H1 (cell line): ENCODE measurements at regions of chr6 and their contacts with region 1.

Region 1: DNA sequence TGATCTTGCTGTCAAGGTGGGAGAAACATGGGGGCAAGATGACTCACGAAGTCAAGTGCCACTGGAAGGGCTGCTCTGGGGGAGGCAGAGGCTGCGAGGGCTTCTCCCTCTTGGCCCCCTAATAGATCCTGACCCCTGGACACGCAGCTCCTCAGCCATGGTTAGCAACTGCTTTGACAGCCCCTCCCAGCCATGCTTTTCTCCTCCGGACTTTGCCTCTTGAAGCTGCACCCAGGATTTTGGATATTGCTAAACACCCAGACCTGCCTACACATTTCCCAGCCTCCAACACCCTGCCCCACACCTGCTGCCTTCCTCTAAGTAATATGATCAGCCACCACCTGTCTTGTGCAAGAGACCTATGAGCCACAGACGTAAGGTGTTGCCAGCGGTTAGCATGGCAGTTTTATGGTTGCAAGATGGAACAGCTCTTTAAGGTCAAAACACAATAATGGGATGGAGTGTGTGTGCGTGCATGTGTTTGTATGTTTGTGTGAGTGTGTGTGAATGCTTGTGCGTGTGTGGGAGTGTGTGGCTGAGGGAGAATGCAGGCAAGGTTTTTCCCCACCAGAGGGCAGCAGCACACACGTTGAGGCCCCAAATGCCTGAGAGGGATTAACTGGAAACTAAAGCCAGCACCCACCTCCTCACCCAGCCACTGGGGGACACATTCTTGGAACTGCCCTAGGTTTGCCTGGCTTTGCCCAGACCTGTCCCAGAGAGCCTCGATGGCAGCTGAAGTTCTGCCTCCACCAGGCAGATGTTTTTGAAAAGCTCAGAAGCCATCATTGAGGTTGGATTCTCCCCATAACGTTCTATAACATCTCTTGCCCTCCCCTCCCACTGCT is 2.5 kb downstream of the IP6K3 start:
- DNase-seq: peak; percentile 62 to 90
- H3K4me3 ChIP-seq: no peak overlapping the region
- H3K27ac ChIP-seq: no peak overlapping the region
- H3K4me1 ChIP-seq: peaks cover 7 to 35% (median 23%) of the 10 kb centered on the region in 4 experiments
- H3K27me3 ChIP-seq: no peaks in the 10 kb centered on the region; a peak in 2 of 7 replicates
- CTCF ChIP-seq: peak in 2 of 3 experiments; percentile 96 to 99; a peak in 3 of 4 replicates
- EP300 ChIP-seq: no peak
- POLR2A ChIP-seq: no peak
- RAD21 ChIP-seq: peak; percentile 86 to 90

Region 2: DNA sequence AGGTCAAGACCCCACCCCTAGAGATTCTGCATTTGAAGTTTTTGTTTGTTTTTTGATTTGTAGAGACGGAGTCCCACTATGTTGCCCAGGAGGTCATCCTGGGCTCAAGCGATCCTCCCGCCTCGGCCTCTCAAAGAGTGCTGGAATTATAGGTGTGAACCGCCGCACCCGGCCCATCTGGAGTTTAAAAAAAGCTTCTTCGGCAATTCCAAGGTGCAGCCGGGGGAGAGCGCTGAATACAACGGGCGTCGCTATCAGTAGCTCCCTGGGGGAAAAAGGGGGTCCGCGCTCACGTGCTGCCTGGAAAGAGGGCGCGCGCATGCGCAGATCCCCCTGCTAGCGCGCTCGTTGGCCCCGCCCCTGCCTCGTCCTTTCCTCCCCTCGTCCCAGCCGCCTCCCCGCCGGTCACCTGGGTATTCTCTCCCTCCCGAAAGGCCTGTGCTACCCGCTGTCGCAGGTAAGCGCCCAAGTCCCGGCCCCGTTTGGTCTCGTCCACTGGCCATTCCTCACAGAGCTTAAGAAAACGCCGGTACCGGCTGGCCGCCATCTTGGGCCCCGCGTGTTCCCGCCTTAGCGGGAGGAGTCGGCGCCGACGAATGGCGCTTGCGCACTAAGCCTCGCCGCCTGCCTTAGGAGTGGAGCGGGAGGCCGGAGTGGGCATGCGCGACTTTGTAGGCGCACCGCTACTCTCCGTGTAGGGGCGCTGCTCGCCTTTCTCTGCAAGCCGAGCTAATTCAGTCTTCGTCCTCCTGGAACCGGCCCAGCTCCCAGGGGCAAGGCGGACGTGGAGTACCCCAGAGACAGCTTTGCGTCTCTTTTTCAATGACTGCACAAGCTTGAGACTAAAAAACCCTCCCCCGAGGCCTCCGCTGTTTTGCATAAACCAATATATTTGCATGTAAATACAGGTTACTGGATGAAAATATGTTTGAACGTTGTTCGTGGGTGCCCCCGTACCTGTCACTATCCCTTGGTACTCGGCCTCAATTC is 32.8 kb before region 1 on chr6 and contains the start of gene UQCC2:
- CTCF ChIA-PET with region 1: interaction called, 25 read pairs
- POLR2A ChIA-PET with region 1: interaction called, 5 read pairs
- DNase-seq: peak; percentile 93 to 96
- H3K4me3 ChIP-seq: peak within 1 kb of the TSS; percentile 59 to 86 (median 77)
- H3K27ac ChIP-seq: peak within 1 kb of the TSS; percentile 98
- H3K4me1 ChIP-seq: peaks cover 2 to 14% (median 6%) of the 10 kb centered on the region in 4 experiments; a peak in 4 of 7 replicates
- H3K27me3 ChIP-seq: no peaks in the 10 kb centered on the region
- CTCF ChIP-seq: peak; percentile 62 to 76 (median 64)
- EP300 ChIP-seq: no peak
- POLR2A ChIP-seq: peak; percentile 78 to 92
- RAD21 ChIP-seq: peak; percentile 80 to 82
- total RNA-seq, gene UQCC2: 104 and 107 TPM in 2 replicates

Region 3: DNA sequence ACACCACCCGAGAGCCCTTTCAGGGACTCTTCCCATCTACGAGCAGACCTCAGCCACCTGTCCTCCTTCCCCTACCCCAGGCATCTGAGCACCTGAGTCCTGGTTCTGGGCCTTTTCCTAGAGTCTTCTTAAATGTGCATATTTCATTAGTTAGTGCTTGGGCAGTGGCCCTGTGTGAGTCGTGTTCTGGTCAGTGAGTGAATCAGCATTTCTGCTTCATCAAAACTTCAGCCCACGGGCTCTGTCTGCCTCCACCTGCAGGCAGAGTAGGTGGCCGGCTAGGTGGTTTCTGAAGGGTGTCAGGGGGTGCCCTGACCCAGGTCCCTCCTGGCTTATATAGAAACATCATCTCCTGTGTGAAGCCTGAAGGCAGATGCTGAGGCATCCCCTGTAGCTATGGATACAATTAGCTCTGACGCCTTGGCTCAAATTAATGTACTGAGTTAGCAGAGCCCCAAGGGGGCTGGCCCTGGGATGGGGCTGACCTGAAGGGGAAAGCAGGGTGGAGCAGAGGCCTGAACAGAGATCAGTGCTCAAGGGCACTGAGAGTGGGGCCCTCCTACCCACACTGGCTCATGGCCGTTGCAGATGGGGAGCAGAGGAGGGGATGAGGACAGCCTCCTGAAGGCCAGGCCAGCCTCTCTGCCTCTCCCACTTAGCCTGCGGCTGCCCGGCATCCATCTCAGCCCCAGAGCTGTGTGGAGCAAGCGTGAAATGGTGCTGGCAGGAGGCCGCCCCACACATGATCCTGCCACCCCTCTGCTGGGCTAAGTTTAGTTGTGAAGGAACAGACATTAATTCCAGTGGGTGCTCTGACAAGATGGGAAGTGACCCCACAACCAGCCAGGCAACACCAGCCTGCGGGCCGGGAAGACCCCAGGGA is 11.2 kb before region 1 on chr6:
- CTCF ChIA-PET with region 1: interaction called, 15 read pairs
- POLR2A ChIA-PET with region 1: interaction called, 4 read pairs
- DNase-seq: no peak
- H3K4me3 ChIP-seq: no peak overlapping the region
- H3K27ac ChIP-seq: no peak overlapping the region
- H3K4me1 ChIP-seq: no peaks in the 10 kb centered on the region
- H3K27me3 ChIP-seq: peaks cover 0 to 5% (median 0%) of the 10 kb centered on the region in 4 experiments; a peak in 3 of 7 replicates
- CTCF ChIP-seq: no peak
- EP300 ChIP-seq: no peak
- POLR2A ChIP-seq: no peak
- RAD21 ChIP-seq: no peak

Region 4: GRCh38 chr6:33761922-33762629 is 17.9 kb after region 1 on chr6:
- CTCF ChIA-PET with region 1: interaction called, 171 read pairs
- POLR2A ChIA-PET with region 1: interaction called, 4 read pairs
- DNase-seq: peak in 1 of 2 experiments; percentile 75
- H3K4me3 ChIP-seq: no peak overlapping the region
- H3K27ac ChIP-seq: no peak overlapping the region
- H3K4me1 ChIP-seq: no peaks in the 10 kb centered on the region
- H3K27me3 ChIP-seq: no peaks in the 10 kb centered on the region
- CTCF ChIP-seq: peak in 2 of 3 experiments; percentile 80 to 81; a peak in 3 of 4 replicates
- EP300 ChIP-seq: no peak
- POLR2A ChIP-seq: no peak
- RAD21 ChIP-seq: peak; percentile 74 to 83

Region 5: GRCh38 chr6:33840048-33840926 is 96.1 kb after region 1 on chr6:
- CTCF ChIA-PET with region 1: interaction called, 11 read pairs
- POLR2A ChIA-PET with region 1: no interaction called
- DNase-seq: no peak
- H3K4me3 ChIP-seq: no peak overlapping the region
- H3K27ac ChIP-seq: no peak overlapping the region
- H3K4me1 ChIP-seq: peaks cover 0 to 19% (median 11%) of the 10 kb centered on the region in 4 experiments; a peak in 6 of 7 replicates
- H3K27me3 ChIP-seq: 0 out of 7 replicates have a peak, but pooled peaks cover 0 to 3% (median 0%) of the 10 kb centered on the region in 4 experiments
- CTCF ChIP-seq: no peak
- EP300 ChIP-seq: no peak
- POLR2A ChIP-seq: no peak
- RAD21 ChIP-seq: no peak

Region 6: GRCh38 chr6:33950472-33950881 is 206.3 kb after region 1 on chr6:
- CTCF ChIA-PET with region 1: interaction called, 13 read pairs
- POLR2A ChIA-PET with region 1: no interaction called
- DNase-seq: no peak
- H3K4me3 ChIP-seq: no peak overlapping the region
- H3K27ac ChIP-seq: no peak overlapping the region
- H3K4me1 ChIP-seq: peaks cover 0 to 12% (median 8%) of the 10 kb centered on the region in 4 experiments; a peak in 6 of 7 replicates
- H3K27me3 ChIP-seq: no peaks in the 10 kb centered on the region; a peak in 2 of 7 replicates
- CTCF ChIP-seq: no peak
- EP300 ChIP-seq: no peak
- POLR2A ChIP-seq: no peak
- RAD21 ChIP-seq: no peak